ENCODE measurements at regions of chr7 and their contacts with region 1.

Region 1: DNA sequence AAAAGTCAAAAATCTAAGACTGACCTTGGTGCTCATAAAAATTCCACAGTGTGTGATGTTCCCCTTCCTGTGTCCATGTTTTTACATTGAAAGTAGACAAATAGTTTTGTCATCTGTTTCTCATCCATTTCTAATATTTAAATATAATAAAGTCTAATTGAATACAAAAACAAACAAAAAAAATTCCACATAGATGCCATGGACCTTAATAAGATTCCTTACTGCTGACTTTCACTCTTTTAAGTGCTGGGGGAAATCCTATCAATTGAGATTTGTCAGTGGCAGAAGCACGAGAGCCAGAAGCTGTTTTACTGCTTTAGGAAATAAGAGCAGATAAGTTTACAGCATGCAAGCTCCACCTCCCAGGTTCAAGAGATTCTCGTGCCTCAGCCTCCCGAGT is 310.0 kb downstream of the ABCA13 start:
- DNase-seq: peak; percentile 56
- ATAC-seq: peak; percentile 85
- H3K4me3 ChIP-seq: no peak overlapping the region
- H3K27ac ChIP-seq: no peak overlapping the region
- H3K4me1 ChIP-seq: peaks cover 7% of the 10 kb centered on the region; the same call in 1 of the 2 replicates
- H3K27me3 ChIP-seq: no peaks in the 10 kb centered on the region
- CTCF ChIP-seq: no peak

Region 2: GRCh38 chr7:48366096-48366495 is 115.1 kb before region 1 on chr7:
- CTCF ChIA-PET with region 1: no interaction called
- POLR2A ChIA-PET with region 1: no interaction called
- intact Hi-C with region 1: loop called (anchors 1 kb)
- DNase-seq: peak; percentile 78
- ATAC-seq: peak; percentile 74
- H3K4me3 ChIP-seq: peak overlapping the region; percentile 26; the same call in 1 of the 2 replicates
- H3K27ac ChIP-seq: peak overlapping the region; percentile 83
- H3K4me1 ChIP-seq: peaks cover 41% of the 10 kb centered on the region
- H3K27me3 ChIP-seq: no peaks in the 10 kb centered on the region
- CTCF ChIP-seq: no peak

Region 3: GRCh38 chr7:48389977-48390376 is 91.3 kb before region 1 on chr7:
- CTCF ChIA-PET with region 1: no interaction called
- POLR2A ChIA-PET with region 1: no interaction called
- intact Hi-C with region 1: loop called (anchors 1 kb)
- DNase-seq: peak; percentile 91
- ATAC-seq: peak; percentile 93
- H3K4me3 ChIP-seq: peak overlapping the region; percentile 29; the same call in 1 of the 2 replicates
- H3K27ac ChIP-seq: peak overlapping the region; percentile 95
- H3K4me1 ChIP-seq: peaks cover 24% of the 10 kb centered on the region
- H3K27me3 ChIP-seq: no peaks in the 10 kb centered on the region
- CTCF ChIP-seq: no peak

Region 4: DNA sequence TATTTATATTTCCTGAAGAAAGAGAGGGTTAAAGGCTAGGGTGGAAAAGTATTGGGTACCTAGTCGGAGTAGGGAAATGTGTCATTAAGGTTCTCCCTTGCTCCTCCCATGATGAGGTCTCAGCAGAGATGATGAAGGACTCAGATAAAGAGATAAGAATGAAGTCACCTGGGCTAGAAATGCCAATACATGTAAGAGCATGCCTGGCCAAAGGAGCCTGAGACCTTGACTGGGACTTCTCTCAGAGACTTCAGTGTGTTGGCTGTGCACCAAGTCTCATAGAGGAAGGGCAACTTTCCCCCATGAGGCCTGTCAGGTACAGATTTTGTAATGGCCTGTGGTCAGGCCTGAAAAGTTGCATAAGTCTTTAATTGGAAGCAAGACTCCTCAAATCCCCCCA is 82.1 kb after region 1 on chr7:
- CTCF ChIA-PET with region 1: no interaction called
- POLR2A ChIA-PET with region 1: no interaction called
- intact Hi-C with region 1: loop called (anchors 1 kb)
- DNase-seq: peak; percentile 34
- ATAC-seq: peak; percentile 56
- H3K4me3 ChIP-seq: no peak overlapping the region
- H3K27ac ChIP-seq: no peak overlapping the region
- H3K4me1 ChIP-seq: peaks cover 9% of the 10 kb centered on the region; the same call in 1 of the 2 replicates
- H3K27me3 ChIP-seq: no peaks in the 10 kb centered on the region
- CTCF ChIP-seq: no peak

Region 5: DNA sequence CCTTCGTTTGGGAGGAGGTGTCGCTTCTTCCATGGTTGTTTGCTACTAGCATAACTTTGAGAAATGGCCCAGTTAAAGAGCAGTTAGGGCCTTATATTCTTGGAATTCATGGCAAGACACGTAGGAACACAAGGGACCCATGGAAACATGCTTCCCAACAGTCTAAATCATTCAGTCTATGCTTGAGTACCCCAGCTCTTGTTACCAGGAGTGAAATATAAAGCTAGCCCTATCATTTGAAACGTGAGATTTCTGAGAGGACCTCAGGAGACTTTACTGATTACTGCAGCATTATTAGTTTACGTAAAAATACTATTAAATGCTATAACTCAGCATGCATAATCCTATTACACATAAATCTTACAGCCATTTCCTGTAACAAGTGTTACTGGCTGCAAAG is 114.5 kb after region 1 on chr7:
- CTCF ChIA-PET with region 1: no interaction called
- POLR2A ChIA-PET with region 1: no interaction called
- intact Hi-C with region 1: no loop called
- DNase-seq: no peak
- ATAC-seq: peak; percentile 42
- H3K4me3 ChIP-seq: no peak overlapping the region
- H3K27ac ChIP-seq: no peak overlapping the region
- H3K4me1 ChIP-seq: no peaks in the 10 kb centered on the region
- H3K27me3 ChIP-seq: no peaks in the 10 kb centered on the region
- CTCF ChIP-seq: no peak

Region 6: DNA sequence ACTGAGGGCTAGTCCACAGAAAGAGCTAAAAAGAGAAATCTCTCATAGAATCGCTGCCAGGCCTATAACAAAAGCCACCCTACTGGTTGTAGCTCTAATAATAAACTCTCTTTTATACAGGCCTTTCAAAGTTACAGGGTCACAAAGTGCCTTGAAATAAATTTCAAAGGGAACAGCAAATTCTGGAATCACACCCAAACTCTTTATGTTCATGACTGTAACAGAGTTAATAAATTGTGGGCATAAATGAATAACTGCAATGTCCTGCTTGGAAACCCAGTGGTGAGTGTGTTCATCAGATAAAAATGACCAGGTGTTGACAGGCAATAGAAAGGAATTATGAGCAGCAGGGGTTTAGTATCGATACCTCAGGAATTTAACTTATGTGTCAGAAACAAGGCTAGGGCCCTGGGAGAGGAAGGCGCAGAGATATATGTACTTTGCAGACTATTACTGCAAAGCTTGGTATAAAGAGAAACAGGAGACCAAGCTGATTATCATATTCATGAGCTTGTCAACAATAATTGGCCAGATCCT is 452.4 kb after region 1 on chr7:
- CTCF ChIA-PET with region 1: no interaction called
- POLR2A ChIA-PET with region 1: no interaction called
- intact Hi-C with region 1: no loop called
- DNase-seq: no peak
- ATAC-seq: no peak
- H3K4me3 ChIP-seq: no peak overlapping the region
- H3K27ac ChIP-seq: no peak overlapping the region
- H3K4me1 ChIP-seq: no peaks in the 10 kb centered on the region
- H3K27me3 ChIP-seq: no peaks in the 10 kb centered on the region
- CTCF ChIP-seq: no peak

Measured in PC-3 (cell line).